ENCODE measurements at regions of chr22 and their contacts with region 1.

Region 1: DNA sequence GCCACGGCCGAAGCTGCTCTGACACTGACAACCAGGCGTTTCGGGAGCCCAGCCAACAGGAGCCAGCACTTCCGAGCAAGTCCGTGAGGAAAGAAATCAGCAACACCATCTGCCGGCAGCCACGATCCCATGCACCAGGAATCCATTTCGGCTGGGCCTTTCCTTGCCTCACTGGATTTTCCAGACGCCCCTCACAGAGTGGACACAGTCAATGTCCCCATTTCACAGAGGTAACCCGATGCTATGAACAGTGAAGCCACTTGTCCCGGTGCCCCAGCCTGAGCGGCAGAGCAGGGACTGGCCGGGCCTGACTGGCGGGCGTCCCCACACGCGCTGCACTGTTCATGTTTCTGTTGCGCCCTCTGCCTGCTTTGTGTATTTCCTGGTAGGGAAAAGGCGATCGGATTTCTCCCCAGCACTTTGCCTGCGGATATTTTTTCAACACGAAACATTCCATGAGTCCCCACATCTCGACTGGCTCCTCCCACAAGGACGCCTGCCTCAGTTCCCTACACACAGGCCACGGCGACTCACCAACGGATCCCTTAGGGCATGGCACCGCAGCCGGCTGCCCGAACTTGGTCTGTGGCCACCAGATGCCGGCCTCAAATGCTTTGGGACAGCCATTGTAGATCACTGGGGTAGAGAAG is 55.3 kb downstream of the TRMU start:
- DNase-seq: peak; percentile 52 to 71
- ATAC-seq: peak; percentile 89 to 91
- H3K4me3 ChIP-seq: peak overlapping the region; percentile 44 to 55 (median 51)
- H3K27ac ChIP-seq: peak overlapping the region; percentile 50 to 72 (median 70)
- H3K4me1 ChIP-seq: peaks cover 7 to 11% of the 10 kb centered on the region in 2 donors
- H3K27me3 ChIP-seq: no peaks in the 10 kb centered on the region
- CTCF ChIP-seq: peak in 4 of 5 experiments; percentile 45 to 59 (median 49)
- POLR2A ChIP-seq: no peak

Region 2: GRCh38 chr22:46355371-46355995 is 35.3 kb before region 1 on chr22:
- in situ Hi-C with region 1: no loop called
- intact Hi-C with region 1: loop called (anchors 1 kb)
- DNase-seq: peak in 1 of 2 donors; percentile 38
- ATAC-seq: peak in 1 of 2 donors; percentile 39
- H3K4me3 ChIP-seq: no peak overlapping the region
- H3K27ac ChIP-seq: no peak overlapping the region
- H3K4me1 ChIP-seq: peaks cover 5% of the 10 kb centered on the region in 2 donors
- H3K27me3 ChIP-seq: no peaks in the 10 kb centered on the region
- CTCF ChIP-seq: peak; percentile 33 to 71 (median 60)
- POLR2A ChIP-seq: no peak

Region 3: GRCh38 chr22:46367707-46368191 is 23.0 kb before region 1 on chr22:
- in situ Hi-C with region 1: no loop called
- intact Hi-C with region 1: loop called (anchors 1 kb)
- DNase-seq: peak in 1 of 2 donors; percentile 44
- ATAC-seq: peak; percentile 62 to 85
- H3K4me3 ChIP-seq: no peak overlapping the region
- H3K27ac ChIP-seq: no peak overlapping the region
- H3K4me1 ChIP-seq: no peaks in the 10 kb centered on the region
- H3K27me3 ChIP-seq: peaks cover 7 to 19% (median 17%) of the 10 kb centered on the region in 3 donors
- CTCF ChIP-seq: peak; percentile 57 to 90 (median 86)
- POLR2A ChIP-seq: no peak

Region 4: DNA sequence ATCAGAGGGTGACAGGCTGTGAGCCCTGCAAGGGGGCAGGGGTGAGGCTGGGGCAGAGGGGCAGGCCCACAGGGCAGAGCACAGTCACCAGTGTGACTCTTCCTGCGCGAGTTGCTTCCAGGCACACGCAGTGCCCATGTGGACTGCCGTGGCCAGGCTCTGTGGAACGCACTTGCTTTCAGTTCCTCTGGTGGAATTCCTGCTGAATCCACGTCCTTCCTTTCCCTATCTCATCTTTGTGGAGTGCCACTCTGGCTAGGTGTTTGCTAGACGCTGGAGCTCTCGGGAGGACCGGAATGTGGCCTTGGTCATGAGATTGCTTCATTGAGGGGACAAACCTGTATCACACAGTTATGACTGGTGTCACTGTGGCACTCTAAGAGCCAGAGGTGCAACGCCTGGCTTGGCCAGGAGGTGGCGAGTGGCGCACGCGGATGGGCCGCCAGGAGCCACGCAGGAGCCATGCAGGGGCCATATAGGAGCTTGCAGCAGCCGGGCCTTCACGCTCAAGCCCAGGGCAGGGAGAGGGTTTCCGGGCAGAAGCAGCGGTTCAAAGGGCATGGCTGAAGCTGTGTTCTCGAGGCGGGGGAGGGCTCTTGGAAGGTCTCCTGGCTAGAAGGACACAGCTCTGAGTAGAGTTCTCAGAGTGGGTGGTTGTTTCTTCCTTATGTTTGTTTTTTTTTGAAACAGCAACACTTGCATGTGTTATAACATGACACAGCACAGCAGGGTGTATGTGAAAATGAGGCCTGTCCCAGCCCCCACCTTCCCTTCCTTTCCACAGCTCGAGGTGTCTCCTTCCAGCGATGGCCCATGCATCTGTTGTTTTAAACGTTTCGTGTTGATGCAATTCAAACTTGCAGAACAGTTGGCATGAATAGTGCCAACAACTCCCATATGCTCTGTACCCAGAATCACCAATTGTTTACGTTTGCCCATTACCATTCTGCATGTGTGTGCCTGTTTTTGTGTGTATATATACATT is 407.9 kb after region 1 on chr22:
- in situ Hi-C with region 1: no loop called
- intact Hi-C with region 1: no loop called
- DNase-seq: peak in 1 of 2 donors; percentile 61
- ATAC-seq: peak; percentile 71 to 82
- H3K4me3 ChIP-seq: no peak overlapping the region
- H3K27ac ChIP-seq: no peak overlapping the region
- H3K4me1 ChIP-seq: peaks cover 0 to 4% of the 10 kb centered on the region in 2 donors
- H3K27me3 ChIP-seq: no peaks in the 10 kb centered on the region
- CTCF ChIP-seq: peak; percentile 84 to 94 (median 90)
- POLR2A ChIP-seq: no peak

Measured in gastrocnemius medialis (tissue), 4 donors.